Psoas muscle (tissue), 8 donors: ENCODE measurements at regions of chr7 and their contacts with region 1.

Region 1: GRCh38 chr7:106285051-106285854 is 470 bp upstream of the NAMPT start:
- DNase-seq: peak; percentile 99
- ATAC-seq: peak; percentile 91 to 95 (median 94)
- H3K4me3 ChIP-seq: peak overlapping the region; percentile 80
- H3K27ac ChIP-seq: peak overlapping the region; percentile 85
- H3K4me1 ChIP-seq: peaks cover 29% of the 10 kb centered on the region
- H3K27me3 ChIP-seq: no peaks in the 10 kb centered on the region
- CTCF ChIP-seq: no peak

Region 2: DNA sequence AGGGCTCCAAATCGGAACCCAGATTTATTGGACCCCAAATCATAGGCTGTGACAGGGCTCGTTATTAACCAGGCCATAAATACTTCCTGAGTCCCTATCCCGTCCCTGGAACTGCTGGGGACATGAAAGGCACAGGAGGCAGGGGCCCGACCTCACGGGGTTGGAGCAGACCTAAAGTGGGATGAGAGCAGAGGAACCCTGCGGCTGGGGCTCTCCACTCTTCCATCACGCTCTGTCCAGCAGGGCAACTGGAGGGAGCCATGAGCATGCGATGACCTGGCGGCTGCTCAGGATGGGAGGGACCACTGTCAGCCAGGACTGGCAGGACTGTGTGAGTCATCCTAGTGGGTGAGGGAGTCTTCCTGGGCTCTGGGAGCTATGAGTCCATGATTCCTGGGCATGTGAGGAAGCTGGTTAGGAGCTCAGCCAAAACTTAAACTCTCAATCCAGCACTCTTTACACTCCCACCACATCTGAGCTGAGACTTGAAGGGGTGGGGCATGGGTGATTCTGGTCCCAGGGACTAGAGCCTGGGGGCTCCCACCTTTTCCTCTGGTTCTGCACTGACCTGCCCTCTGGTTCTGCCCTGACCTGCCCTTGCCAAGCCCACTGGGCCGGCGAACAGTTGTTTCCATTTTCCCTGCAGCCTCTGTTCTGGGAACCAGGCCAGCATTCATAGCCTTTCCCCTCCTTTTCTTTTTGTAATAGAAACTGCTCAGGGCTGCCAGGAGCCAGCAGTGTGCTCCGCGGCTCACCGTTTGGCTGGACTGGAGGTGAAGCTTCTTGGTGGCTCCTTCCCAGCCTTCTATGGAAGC is 220.3 kb before region 1 on chr7:
- intact Hi-C with region 1: loop called in 1 of 2 experiments (anchors 10 kb)
- DNase-seq: peak; percentile 88 to 94
- ATAC-seq: peak; percentile 96 to 98 (median 97)
- H3K4me3 ChIP-seq: peak overlapping the region; percentile 57
- H3K27ac ChIP-seq: peak overlapping the region; percentile 87
- H3K4me1 ChIP-seq: peaks cover 20% of the 10 kb centered on the region
- H3K27me3 ChIP-seq: no peaks in the 10 kb centered on the region
- CTCF ChIP-seq: peak; percentile 16

Region 3: GRCh38 chr7:106176414-106177299 is 108.6 kb before region 1 on chr7:
- intact Hi-C with region 1: loop called (anchors 2 to 10 kb)
- DNase-seq: peak; percentile 85 to 88
- ATAC-seq: peak; percentile 89 to 96 (median 94)
- H3K4me3 ChIP-seq: no peak overlapping the region
- H3K27ac ChIP-seq: peak overlapping the region; percentile 78
- H3K4me1 ChIP-seq: peaks cover 28% of the 10 kb centered on the region
- H3K27me3 ChIP-seq: no peaks in the 10 kb centered on the region
- CTCF ChIP-seq: peak; percentile 94

Region 4: DNA sequence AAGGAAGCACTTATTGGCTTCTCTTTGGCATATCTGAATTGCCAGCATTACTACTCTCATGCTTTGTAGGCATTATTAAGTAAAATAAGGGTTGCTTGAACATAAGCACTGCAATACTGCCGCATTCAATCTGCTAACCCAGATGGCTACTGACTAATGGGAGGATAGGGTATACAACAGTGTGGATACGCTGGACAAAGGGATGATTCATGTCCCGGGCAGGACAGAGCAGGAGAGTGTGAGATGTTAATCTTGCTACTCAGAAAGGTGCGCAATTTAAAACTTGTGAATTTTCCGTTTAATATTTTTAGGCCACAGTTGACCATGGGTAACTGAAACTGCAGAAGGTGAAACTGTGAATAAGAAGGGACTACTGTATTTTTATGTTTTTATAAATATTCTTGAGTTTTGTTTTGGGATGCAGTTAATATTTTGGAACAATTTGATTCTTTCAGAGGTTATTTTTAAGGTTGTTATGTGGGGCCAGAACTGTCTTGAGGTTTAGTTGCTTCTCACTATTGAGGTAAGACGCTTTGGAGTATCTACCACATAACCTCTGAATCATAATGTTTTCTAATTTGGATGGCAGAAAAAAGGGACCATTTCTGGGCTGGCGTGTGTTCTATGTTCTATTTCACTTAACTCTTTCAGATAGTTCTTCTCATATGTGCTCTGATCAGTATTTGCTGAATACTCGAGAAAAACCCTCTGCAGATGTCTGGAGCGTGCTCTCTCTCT is 97.5 kb before region 1 on chr7:
- intact Hi-C with region 1: no loop called
- DNase-seq: no peak
- ATAC-seq: no peak
- H3K4me3 ChIP-seq: no peak overlapping the region
- H3K27ac ChIP-seq: no peak overlapping the region
- H3K4me1 ChIP-seq: no peaks in the 10 kb centered on the region
- H3K27me3 ChIP-seq: no peaks in the 10 kb centered on the region
- CTCF ChIP-seq: no peak

Region 5: GRCh38 chr7:106216517-106216922 is 68.7 kb before region 1 on chr7:
- intact Hi-C with region 1: loop called in 1 of 2 experiments (anchors 2 kb)
- DNase-seq: peak; percentile 22 to 57
- ATAC-seq: peak; percentile 91 to 96 (median 93)
- H3K4me3 ChIP-seq: peak overlapping the region; percentile 49
- H3K27ac ChIP-seq: peak overlapping the region; percentile 89
- H3K4me1 ChIP-seq: peaks cover 26% of the 10 kb centered on the region
- H3K27me3 ChIP-seq: no peaks in the 10 kb centered on the region
- CTCF ChIP-seq: no peak

Region 6: DNA sequence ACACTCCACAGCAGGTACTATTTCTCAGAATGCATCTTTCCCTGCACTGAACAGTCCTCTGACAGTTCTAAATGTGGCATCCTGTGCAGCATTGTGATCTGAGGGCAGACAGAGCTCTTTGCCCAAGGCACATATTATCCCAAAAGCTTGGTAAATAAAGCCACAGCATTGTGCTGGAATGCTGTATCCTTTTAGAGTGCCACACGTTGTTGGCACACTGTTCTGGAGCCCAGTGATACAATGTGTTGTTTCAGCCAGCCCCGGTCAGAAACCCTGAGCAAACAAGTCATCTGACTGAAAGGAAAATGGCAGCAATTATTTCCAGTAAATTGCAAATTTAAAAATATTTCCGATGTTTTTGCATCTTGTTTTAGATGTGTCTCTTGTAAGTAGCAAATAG is 45.8 kb before region 1 on chr7:
- intact Hi-C with region 1: no loop called
- DNase-seq: no peak
- ATAC-seq: no peak
- H3K4me3 ChIP-seq: no peak overlapping the region
- H3K27ac ChIP-seq: no peak overlapping the region
- H3K4me1 ChIP-seq: no peaks in the 10 kb centered on the region
- H3K27me3 ChIP-seq: no peaks in the 10 kb centered on the region
- CTCF ChIP-seq: no peak

Region 7: DNA sequence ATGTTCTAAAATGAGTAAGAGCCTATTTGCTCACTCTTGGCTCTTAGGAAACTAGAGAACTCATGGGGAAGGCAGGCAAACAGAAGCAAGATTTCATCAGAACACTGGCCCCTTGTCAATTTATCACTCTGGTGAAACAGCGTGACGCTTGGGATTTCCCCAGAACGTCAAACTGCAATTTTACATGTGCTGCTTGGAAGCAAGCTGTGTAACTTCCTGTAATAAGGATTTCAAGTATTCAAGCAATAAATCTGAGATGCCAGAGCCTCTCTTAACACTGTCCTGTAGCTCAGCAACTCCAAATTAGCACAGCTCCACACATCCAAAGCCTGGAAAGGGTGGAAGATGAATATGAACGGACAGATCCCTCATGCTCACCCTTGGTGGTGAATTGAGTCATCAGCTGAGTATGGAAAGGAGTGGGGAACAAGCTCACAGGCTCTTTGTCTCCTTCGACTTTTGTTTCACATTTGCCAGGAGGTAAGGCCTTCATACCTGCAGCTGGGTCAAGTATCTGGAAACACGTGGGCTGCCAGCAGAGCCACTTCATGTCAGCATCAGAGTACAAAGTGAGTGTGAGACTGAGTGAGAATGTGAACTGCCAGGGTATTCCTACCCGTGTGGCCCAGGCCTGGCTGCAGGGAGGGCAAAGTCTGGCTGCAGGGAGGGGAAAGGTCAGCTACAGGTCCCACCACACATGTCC is 139.9 kb after region 1 on chr7:
- intact Hi-C with region 1: loop called (anchors 1 to 10 kb)
- DNase-seq: peak; percentile 49 to 71
- ATAC-seq: peak; percentile 82 to 92 (median 84)
- H3K4me3 ChIP-seq: peak overlapping the region; percentile 43
- H3K27ac ChIP-seq: peak overlapping the region; percentile 89
- H3K4me1 ChIP-seq: peaks cover 41% of the 10 kb centered on the region
- H3K27me3 ChIP-seq: no peaks in the 10 kb centered on the region
- CTCF ChIP-seq: no peak

Region 8: GRCh38 chr7:106461993-106462859 is 177.0 kb after region 1 on chr7:
- intact Hi-C with region 1: loop called in 1 of 2 experiments (anchors 5 kb)
- DNase-seq: no peak
- ATAC-seq: peak in 3 of 4 donors; percentile 43 to 75 (median 49)
- H3K4me3 ChIP-seq: no peak overlapping the region
- H3K27ac ChIP-seq: no peak overlapping the region
- H3K4me1 ChIP-seq: peaks cover 9% of the 10 kb centered on the region
- H3K27me3 ChIP-seq: no peaks in the 10 kb centered on the region
- CTCF ChIP-seq: peak; percentile 67

Region 9: DNA sequence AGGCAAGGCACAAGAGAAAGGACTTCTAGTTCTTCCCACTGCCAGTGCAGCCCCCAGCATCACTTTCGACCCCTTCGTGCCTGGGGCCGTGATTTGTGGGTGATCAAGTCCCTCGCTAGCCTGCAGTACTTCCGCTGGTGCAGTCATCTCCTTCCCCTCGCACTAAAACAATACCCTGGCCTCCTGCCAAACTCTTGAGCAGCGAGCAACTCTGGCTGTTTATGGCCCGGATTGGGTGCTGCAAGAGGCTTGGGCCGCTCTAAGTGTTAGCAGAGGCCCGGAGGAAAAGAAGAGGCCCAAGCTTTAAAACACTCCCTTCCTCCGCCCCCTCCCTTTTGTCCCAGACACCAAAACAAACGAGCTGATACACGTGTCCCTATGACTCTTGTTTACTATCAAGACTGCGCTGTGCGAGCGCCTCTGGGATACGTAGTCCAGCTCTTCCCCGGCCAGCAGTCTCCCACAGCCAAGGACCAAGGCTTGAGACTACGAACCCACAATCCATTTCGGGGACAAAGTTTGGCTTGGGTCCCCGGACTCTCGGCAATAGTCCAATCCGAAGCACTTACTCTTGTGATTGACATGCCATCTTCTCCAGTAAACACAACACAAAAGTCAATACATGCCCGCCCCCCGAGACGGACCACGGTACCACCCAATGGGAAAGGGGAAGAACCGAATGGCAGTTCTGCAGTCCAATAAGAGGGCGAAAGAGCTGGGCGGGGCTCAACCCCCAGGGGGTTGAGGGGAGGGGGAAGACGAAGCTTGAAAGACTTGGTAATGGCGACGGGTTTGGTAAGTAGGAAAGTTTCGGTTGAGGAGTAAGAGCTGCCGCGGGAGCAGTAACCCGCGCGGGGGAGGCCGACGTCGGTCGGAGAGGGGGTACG is 883.2 kb after region 1 on chr7 and contains the start of gene HBP1:
- intact Hi-C with region 1: loop called in 1 of 2 experiments (anchors 10 kb)
- DNase-seq: peak; percentile 99
- ATAC-seq: peak; percentile 88 to 94 (median 90)
- H3K4me3 ChIP-seq: peak within 1 kb of the TSS; percentile 82
- H3K27ac ChIP-seq: peak within 1 kb of the TSS; percentile 99
- H3K4me1 ChIP-seq: peaks cover 33% of the 10 kb centered on the region
- H3K27me3 ChIP-seq: no peaks in the 10 kb centered on the region
- CTCF ChIP-seq: no peak
- total RNA-seq, gene HBP1: 65.3 to 74.9 (median 70.7) TPM